Lower leg skin (tissue), 4 donors: ENCODE measurements at regions of chr2 and their contacts with region 1.

Region 1: GRCh38 chr2:67752969-67753368 is 309.8 kb downstream of the C1D start:
- DNase-seq: no peak
- H3K4me3 ChIP-seq: no peak overlapping the region
- CTCF ChIP-seq: no peak
- POLR2A ChIP-seq: no peak

Region 2: DNA sequence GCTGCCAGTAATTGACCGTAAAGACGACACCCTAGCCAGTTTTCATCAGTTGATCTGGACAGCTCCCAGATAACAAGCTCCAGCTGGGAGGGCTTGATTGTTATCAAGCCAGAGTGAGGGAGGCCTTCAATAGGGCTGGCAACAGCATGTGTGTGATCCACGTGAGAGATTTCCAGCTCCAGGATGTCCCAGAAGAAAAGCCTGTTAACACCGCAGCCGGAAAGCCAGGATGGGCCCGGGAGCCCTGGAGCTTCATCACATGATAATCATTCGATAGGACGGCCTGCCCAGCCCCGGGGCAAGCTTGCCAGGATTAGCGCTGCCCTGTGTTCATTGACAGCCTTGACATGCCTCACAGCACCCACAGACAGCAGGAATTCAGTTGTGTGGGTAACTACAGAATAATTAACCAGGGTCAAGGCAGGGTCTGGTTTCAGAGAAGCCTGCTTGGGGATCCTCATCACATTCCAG is 127.4 kb after region 1 on chr2:
- intact Hi-C with region 1: loop called (anchors 5 kb)
- DNase-seq: peak; percentile 34 to 86
- H3K4me3 ChIP-seq: no peak overlapping the region
- CTCF ChIP-seq: no peak
- POLR2A ChIP-seq: no peak

Region 3: DNA sequence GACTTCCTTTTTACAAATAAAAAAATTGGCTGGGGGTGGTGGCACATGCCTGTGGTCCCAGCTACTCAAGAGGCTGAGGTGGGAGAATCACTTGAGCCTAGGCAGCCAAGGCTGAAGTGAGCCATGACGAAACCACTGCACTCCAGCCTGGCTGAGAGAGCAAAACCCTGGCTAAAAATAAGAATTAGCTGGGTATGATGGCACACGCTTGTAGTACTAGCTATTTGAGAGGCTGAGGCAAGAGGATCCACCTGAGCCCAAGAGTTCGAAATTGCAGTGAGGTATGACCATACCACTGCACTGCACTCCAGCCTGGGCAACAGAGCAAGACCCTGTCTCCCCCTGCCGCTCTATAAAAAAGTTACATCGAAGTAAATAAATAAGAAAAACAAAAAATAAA is 1600.4 kb after region 1 on chr2:
- intact Hi-C with region 1: no loop called
- DNase-seq: no peak
- H3K4me3 ChIP-seq: no peak overlapping the region
- CTCF ChIP-seq: no peak
- POLR2A ChIP-seq: no peak